Posterior cingulate gyrus (tissue), 11 donors: ENCODE measurements at regions of chr2 and their contacts with region 1.

Region 1: DNA sequence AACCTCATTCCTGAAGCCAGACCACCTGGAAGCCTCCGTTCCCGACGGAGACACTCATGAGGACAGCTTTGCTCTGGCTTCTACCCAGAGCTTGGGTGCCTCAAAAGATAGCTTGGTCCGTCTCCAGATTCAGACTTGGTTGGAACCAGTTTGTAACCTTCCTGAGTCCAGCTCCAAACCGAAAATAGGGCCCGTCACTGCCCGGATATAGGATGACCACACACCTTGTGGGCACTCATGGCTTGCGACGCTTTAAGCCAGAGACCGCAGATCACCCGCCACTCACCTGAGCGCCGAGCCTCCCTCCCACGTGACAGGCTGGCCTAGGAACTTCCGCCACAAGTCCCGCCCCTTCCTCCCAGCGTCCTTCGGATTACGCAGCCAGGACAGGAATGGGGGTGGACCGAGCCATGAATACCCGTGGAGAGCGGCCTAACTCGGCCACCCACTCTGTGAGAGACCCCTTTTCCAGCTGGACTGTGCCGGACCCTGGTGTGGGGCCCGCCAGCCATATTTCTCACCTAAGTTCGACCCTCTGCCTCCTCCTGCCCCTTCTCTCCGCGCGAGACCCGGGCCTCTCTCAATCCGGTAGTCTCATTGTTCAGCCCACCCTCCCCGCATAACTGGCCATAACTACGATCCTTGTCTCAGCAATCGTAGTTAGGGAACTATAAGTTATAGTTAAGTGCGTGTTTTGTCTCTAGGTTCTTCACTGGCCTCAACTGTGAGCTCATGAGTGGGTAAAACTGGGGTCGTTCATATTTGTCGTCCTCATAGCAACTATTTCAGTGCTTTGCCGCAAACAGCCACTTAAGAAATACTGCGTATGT is at the start of gene MPV17:
- DNase-seq: peak; percentile 89 to 99 (median 94)

Region 2: DNA sequence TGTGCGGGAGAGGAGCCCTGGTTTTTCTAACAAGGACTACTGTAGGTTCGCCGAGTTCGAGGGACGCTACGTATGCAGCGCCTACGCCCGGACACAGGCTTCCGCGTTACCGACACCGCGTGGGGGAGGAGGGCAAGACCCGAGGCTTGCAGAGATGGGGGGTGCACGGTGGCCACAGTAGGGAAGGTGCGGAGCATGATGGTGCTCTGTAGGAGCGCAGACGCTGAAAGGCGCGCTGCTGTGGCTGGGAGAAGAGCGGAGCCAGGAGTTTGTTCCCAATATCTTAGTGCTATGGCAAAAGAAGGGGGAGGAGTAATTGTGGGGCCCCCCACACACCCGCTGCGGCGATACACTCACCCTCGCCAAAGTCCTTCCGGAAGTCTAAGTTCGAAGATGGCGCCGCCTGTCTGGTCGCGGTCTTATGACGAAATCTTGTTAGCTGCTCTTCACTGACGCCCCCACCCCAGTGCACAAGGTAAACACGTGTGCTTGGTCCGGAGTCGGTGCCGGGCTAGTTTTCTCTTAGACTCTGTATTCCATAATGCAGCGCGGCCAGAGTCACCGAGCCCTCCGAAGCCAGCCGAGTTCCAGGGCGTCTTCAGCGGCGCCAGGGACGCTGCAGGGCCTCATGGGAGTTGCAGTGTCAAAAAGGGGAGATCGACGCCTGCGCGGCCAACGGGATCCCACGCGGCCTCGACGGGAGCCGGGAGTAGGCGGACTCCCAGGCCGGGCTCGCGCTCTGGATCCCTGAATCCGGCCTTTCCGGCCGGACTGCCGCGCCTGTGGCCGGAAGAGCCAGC is 33.6 kb after region 1 on chr2 and contains the start of gene GTF3C2:
- intact Hi-C with region 1: loop called (anchors 5 kb)
- DNase-seq: peak; percentile 91 to 99 (median 95)